Activated naive CD4-positive, alpha-beta T cell treated with anti-CD3 and anti-CD28 coated beads for 36 hours (primary cell): ENCODE measurements at regions of chr10 and their contacts with region 1.

Region 1: GRCh38 chr10:123132576-123133477 is 2.9 kb upstream of the HMX3 start:
- DNase-seq: peak; percentile 94
- H3K4me3 Mint-ChIP-seq: peak overlapping the region; percentile 44
- H3K27ac Mint-ChIP-seq: peak overlapping the region; percentile 2
- H3K4me1 Mint-ChIP-seq: peaks cover 29% of the 10 kb centered on the region
- H3K27me3 Mint-ChIP-seq: peaks cover 75% of the 10 kb centered on the region

Region 2: GRCh38 chr10:122648599-122649428 is 484.0 kb before region 1 on chr10:
- CTCF ChIA-PET with region 1: interaction called, 3 read pairs
- intact Hi-C with region 1: loop called (anchors 5 kb)
- DNase-seq: peak; percentile 59
- H3K4me3 Mint-ChIP-seq: no peak overlapping the region
- H3K27ac Mint-ChIP-seq: no peak overlapping the region
- H3K4me1 Mint-ChIP-seq: no peaks in the 10 kb centered on the region
- H3K27me3 Mint-ChIP-seq: peaks cover 19% of the 10 kb centered on the region

Region 3: GRCh38 chr10:123008439-123009205 is 124.2 kb before region 1 on chr10 and contains the starts of genes ACADSB and IKZF5:
- CTCF ChIA-PET with region 1: no interaction called
- intact Hi-C with region 1: loop called (anchors 1 kb)
- DNase-seq: peak; percentile 98
- H3K4me3 Mint-ChIP-seq: peak within 1 kb of the TSS; percentile 100
- H3K27ac Mint-ChIP-seq: peak within 1 kb of the TSS; percentile 98
- H3K4me1 Mint-ChIP-seq: peaks cover 34% of the 10 kb centered on the region
- H3K27me3 Mint-ChIP-seq: no peaks in the 10 kb centered on the region
- total RNA-seq, gene ACADSB: 19.8 to 21.8 TPM
- total RNA-seq, gene IKZF5: 15.3 to 16.2 TPM

Region 4: DNA sequence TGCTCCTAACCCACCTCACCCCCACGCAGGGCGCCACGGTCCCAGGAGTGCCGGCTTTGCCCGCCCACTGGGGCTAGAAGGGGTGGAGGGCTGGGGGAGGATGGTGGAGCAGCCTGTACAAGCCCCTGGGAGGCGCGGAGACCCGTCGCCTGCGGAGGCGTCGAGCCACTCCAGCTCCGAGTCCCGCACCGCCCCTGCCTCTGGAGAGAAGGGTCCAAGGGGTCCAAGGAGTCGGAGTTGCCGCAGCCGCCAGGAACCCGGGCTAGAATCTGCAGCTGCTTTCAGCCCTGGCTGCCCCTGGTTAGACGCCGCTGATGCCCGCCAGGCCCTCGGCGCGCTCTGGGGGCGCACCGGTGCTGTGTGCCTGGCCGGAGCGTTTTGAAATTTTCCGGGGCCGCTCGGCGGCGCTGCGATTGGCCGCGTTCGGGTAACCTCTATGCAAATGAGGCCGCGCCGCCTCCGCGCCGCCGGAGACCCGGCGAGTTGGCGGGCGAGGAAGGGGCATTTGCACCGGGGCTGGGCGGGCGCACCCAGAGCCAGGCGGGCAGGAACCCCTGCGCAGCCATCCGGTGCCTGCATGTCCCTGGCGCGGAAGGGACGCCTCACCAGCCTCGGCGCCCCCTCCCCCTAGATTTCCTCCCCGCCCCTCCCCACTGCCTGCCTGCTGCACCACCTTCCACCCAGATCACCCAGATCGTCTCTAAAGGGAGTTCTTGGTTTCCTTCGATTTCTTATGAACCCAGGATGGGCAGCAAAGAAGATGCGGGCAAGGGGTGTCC is 15.0 kb after region 1 on chr10 and contains the start of gene HMX2:
- CTCF ChIA-PET with region 1: interaction called, 18 read pairs
- intact Hi-C with region 1: loop called (anchors 1 kb)
- DNase-seq: peak; percentile 58
- H3K4me3 Mint-ChIP-seq: peak within 1 kb of the TSS; percentile 63
- H3K27ac Mint-ChIP-seq: no peak within 1 kb of the TSS
- H3K4me1 Mint-ChIP-seq: peaks cover 63% of the 10 kb centered on the region
- H3K27me3 Mint-ChIP-seq: peaks cover 50% of the 10 kb centered on the region
- total RNA-seq, gene HMX2: 0.62 to 0.99 TPM

Region 5: DNA sequence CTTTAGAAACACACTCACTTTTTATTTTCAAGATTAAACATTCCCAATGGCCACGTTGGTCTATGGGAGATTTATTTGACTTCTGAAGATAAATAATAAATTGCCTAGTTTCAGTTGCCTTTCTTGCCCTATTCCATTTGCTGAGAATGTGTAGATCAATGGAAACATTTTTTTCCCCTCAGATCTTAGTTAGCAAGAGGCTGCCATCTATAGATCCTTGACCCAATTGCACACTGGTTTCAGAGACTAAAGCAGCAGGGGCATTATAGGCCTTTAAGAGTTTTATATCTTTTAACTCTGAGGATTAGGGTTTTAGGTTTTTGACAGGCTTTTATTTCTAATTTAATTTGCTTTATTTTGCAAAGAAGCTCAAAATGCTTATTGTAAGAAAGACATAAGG is 370.2 kb after region 1 on chr10:
- CTCF ChIA-PET with region 1: no interaction called
- intact Hi-C with region 1: loop called (anchors 1 kb)
- DNase-seq: no peak
- H3K4me3 Mint-ChIP-seq: no peak overlapping the region
- H3K27ac Mint-ChIP-seq: no peak overlapping the region
- H3K4me1 Mint-ChIP-seq: no peaks in the 10 kb centered on the region
- H3K27me3 Mint-ChIP-seq: no peaks in the 10 kb centered on the region

Region 6: GRCh38 chr10:123967396-123968243 is 834.8 kb after region 1 on chr10:
- CTCF ChIA-PET with region 1: no interaction called
- intact Hi-C with region 1: loop called (anchors 5 kb)
- DNase-seq: peak; percentile 74
- H3K4me3 Mint-ChIP-seq: no peak overlapping the region
- H3K27ac Mint-ChIP-seq: no peak overlapping the region
- H3K4me1 Mint-ChIP-seq: no peaks in the 10 kb centered on the region
- H3K27me3 Mint-ChIP-seq: peaks cover 54% of the 10 kb centered on the region